Adrenal gland (tissue), 19 donors: ENCODE measurements at regions of chr20 and their contacts with region 1.

Region 1: DNA sequence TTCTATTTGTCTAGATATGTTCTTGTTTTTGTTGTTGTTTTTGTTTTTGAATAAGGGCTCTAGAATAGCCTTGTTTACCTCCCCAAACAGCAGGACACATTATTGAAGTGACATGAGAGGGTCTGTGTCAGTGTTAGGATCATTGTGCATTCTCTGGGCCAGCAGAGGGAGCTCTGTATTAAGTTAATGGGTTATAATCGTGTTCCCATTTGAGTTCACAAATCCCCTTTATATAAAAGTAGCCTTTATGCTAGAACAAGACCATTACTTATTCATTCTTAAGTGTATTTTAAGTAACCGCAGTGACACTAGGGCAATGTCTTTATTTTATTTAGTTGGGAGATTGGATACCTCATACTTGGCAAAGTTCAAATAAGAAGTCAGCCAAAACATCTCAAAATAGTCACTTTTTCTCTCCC is 44.8 kb downstream of the STK4 start:
- DNase-seq: peak; percentile 38 to 82 (median 59)
- H3K4me3 ChIP-seq: no peak overlapping the region
- H3K27ac ChIP-seq: no peak overlapping the region
- H3K4me1 ChIP-seq: peaks cover 8 to 15% of the 10 kb centered on the region in 2 donors
- H3K27me3 ChIP-seq: no peaks in the 10 kb centered on the region
- CTCF ChIP-seq: peak; percentile 54 to 79 (median 68)
- POLR2A ChIP-seq: no peak

Region 2: GRCh38 chr20:45111799-45112471 is 100.8 kb after region 1 on chr20:
- intact Hi-C with region 1: loop called in 1 of 2 experiments (anchors 10 kb)
- DNase-seq: no peak
- H3K4me3 ChIP-seq: no peak overlapping the region
- H3K27ac ChIP-seq: no peak overlapping the region
- H3K4me1 ChIP-seq: no peaks in the 10 kb centered on the region
- H3K27me3 ChIP-seq: peaks cover 4% of the 10 kb centered on the region
- CTCF ChIP-seq: peak; percentile 20 to 50 (median 45)
- POLR2A ChIP-seq: no peak